A549 (cell line): ENCODE measurements at regions of chr11 and their contacts with region 1.

Region 1: GRCh38 chr11:3091791-3092602 is 34.8 kb upstream of the CARS1 start:
- DNase-seq: peak; percentile 83 to 89
- ATAC-seq: peak; percentile 78 to 93
- H3K4me3 ChIP-seq: no peak overlapping the region
- H3K27ac ChIP-seq: no peak overlapping the region
- H3K4me1 ChIP-seq: no peaks in the 10 kb centered on the region
- CTCF ChIP-seq: peak; percentile 96
- EP300 ChIP-seq: no peak
- POLR2A ChIP-seq: no peak
- RAD21 ChIP-seq: peak; percentile 90 to 92

Region 2: DNA sequence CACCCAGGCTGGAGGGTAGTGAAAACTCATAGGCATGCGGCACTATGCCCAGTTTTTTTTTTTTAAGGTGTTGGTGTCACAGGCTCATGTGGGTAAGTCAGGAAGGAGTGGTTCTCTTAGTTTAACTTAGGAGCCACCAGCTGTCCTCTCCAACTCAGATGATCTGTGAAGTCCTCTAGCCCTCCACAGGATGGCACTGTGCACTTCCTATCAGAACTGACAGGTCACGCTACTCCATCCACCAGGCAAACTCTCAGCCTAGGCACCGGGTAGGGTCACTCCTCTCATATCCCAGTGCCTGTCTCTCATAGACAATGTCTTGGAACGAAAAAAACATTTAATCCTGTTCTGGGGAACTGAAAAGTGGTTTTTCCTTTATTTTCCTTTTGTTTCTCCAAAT is 116.4 kb before region 1 on chr11:
- CTCF ChIA-PET with region 1: interaction called, 23 read pairs
- POLR2A ChIA-PET with region 1: no interaction called
- DNase-seq: peak; percentile 51 to 67
- ATAC-seq: peak; percentile 93 to 97
- H3K4me3 ChIP-seq: no peak overlapping the region
- H3K27ac ChIP-seq: no peak overlapping the region
- H3K4me1 ChIP-seq: no peaks in the 10 kb centered on the region
- CTCF ChIP-seq: peak; percentile 55
- EP300 ChIP-seq: no peak
- POLR2A ChIP-seq: no peak
- RAD21 ChIP-seq: peak; percentile 40 to 44; a peak in 4 of 5 replicates

Region 3: GRCh38 chr11:3030289-3031070 is 61.5 kb before region 1 on chr11:
- CTCF ChIA-PET with region 1: interaction called, 210 read pairs
- POLR2A ChIA-PET with region 1: no interaction called
- DNase-seq: no peak
- ATAC-seq: no peak
- H3K4me3 ChIP-seq: no peak overlapping the region
- H3K27ac ChIP-seq: no peak overlapping the region
- H3K4me1 ChIP-seq: no peaks in the 10 kb centered on the region
- CTCF ChIP-seq: no peak
- EP300 ChIP-seq: no peak
- POLR2A ChIP-seq: no peak
- RAD21 ChIP-seq: no peak

Region 4: DNA sequence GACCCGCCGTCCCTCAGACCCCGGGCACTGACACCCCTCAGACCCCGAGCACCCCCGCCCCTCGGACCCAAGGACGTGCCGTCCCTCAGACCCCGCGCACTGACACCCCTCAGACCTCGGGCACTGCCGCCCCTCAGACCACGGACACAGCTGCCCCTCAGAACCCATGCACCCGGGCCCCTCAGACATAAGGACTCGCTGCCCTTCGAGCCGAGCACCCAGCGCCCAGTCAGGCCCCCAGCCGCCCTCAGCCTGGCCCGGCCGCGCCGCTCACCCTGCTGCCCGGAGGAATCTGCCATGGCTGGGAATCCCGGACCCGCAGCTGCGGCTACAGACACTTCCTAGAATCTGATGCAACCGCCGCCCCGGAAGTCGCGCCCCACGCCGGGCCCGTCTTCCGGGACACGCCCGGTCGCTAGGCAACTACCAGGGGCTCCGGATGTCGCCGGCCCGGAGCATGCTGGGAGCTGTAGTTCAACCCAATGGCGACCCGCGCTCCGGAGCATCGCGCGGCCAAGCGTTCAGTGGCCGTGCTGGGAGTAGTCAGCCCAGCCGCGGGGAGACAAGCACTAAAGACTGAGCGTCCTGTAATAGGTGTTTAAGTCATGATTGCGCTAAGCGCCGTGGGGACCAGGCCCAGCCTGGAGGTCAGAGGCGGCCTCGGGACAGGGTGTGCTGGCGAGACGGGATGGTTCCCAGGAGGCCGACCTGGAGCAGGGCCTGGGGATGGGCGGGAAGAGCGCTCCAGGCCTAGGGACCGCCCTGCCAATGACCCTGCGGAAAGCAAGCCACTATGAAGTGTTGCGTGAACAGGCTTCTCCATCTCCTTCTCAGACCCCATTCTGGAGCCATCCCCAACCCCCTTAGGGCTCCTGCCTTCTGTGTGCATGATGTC is 34.7 kb before region 1 on chr11 and contains the start of gene CARS1:
- CTCF ChIA-PET with region 1: interaction called, 112 read pairs
- POLR2A ChIA-PET with region 1: interaction called, 3 read pairs
- DNase-seq: peak; percentile 92 to 94
- ATAC-seq: peak; percentile 99
- H3K4me3 ChIP-seq: peak within 1 kb of the TSS; percentile 83
- H3K27ac ChIP-seq: peak within 1 kb of the TSS; percentile 98 to 99
- H3K4me1 ChIP-seq: peaks cover 29% of the 10 kb centered on the region
- CTCF ChIP-seq: no peak
- EP300 ChIP-seq: no peak
- POLR2A ChIP-seq: peak; percentile 53
- RAD21 ChIP-seq: no peak
- polyA plus RNA-seq, gene CARS1: 109 and 130 TPM in 2 replicates

Region 5: GRCh38 chr11:3109921-3110706 is 18.1 kb after region 1 on chr11:
- CTCF ChIA-PET with region 1: interaction called, 40 read pairs
- POLR2A ChIA-PET with region 1: no interaction called
- DNase-seq: peak; percentile 36 to 60
- ATAC-seq: peak; percentile 68 to 86; a peak in 5 of 6 replicates
- H3K4me3 ChIP-seq: no peak overlapping the region
- H3K27ac ChIP-seq: no peak overlapping the region
- H3K4me1 ChIP-seq: no peaks in the 10 kb centered on the region
- CTCF ChIP-seq: peak; percentile 17; the same call in 1 of the 3 replicates
- EP300 ChIP-seq: no peak
- POLR2A ChIP-seq: no peak
- RAD21 ChIP-seq: peak in 1 of 2 experiments; percentile 44; a peak in 2 of 5 replicates

Region 6: DNA sequence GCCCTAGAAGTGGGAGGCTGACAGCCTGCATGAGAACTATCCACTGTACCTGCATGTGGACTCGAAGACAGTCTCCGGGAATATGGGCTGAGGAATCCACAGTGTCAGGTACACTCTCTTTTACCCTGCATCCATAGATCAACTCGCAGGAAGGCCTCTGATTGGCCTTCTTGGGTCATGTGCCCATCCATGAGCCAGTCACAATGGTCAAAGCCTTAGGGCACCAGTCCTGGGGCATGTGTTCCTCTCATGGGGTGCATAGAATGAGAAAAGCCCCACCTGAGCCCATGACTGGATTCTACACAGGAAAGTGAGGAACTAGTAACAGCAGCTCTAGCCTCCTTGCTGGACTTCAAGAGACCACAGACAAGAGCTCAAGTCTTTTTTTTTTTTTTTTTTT is 563.6 kb after region 1 on chr11:
- CTCF ChIA-PET with region 1: no interaction called
- POLR2A ChIA-PET with region 1: no interaction called
- DNase-seq: no peak
- ATAC-seq: peak in 1 of 2 experiments; percentile 63; a peak in 3 of 6 replicates
- H3K4me3 ChIP-seq: no peak overlapping the region
- H3K27ac ChIP-seq: no peak overlapping the region
- H3K4me1 ChIP-seq: no peaks in the 10 kb centered on the region
- CTCF ChIP-seq: no peak
- EP300 ChIP-seq: no peak
- POLR2A ChIP-seq: no peak
- RAD21 ChIP-seq: no peak